ENCODE measurements at regions of chr16 and their contacts with region 1.

Region 1: DNA sequence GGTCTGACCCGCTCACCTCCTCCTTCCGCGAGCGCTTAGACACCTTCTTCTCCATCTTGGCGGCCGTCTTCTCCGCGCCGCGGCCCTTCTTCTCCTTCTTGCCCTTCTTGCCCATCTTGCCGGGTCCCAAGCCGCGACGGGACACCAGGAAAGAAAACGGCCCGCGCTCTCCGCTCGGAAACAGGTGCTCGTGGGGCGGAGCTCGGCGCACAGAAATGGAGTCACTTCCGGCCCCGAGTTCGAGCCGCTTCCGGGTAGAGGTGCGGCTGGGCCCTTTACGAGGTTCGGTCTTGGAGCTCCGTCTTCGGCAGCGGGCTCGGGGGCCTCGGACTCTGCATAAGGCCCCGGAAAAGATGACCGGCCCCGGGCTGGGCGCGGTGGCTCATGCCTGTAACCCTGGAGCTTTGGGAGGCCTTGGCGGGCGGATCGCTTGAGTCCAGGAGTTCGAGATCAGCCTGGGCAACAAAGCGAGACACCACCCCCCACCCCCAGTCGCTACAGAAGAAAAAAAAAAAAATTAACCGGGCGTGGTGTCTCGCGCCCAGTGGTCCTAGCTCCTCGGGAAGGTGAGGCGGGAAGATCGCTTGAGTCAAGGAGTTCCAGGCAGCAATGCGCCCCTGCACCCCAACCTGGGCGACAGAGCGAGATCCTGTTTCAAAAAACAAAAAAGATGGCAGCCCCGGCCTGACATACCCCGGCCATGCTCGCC is at the start of gene KLHDC4:
- DNase-seq: peak; percentile 75
- ATAC-seq: peak; percentile 74
- H3K4me3 ChIP-seq: peak within 1 kb of the TSS; percentile 99
- H3K27ac ChIP-seq: peak within 1 kb of the TSS; percentile 18; the same call in 1 of the 2 replicates
- H3K4me1 ChIP-seq: 0 out of 2 replicates have a peak, but pooled peaks cover 4% of the 10 kb centered on the region
- H3K27me3 ChIP-seq: no peaks in the 10 kb centered on the region
- CTCF ChIP-seq: no peak
- total RNA-seq, gene KLHDC4: 36.3 and 68.2 TPM in 2 replicates

Region 2: DNA sequence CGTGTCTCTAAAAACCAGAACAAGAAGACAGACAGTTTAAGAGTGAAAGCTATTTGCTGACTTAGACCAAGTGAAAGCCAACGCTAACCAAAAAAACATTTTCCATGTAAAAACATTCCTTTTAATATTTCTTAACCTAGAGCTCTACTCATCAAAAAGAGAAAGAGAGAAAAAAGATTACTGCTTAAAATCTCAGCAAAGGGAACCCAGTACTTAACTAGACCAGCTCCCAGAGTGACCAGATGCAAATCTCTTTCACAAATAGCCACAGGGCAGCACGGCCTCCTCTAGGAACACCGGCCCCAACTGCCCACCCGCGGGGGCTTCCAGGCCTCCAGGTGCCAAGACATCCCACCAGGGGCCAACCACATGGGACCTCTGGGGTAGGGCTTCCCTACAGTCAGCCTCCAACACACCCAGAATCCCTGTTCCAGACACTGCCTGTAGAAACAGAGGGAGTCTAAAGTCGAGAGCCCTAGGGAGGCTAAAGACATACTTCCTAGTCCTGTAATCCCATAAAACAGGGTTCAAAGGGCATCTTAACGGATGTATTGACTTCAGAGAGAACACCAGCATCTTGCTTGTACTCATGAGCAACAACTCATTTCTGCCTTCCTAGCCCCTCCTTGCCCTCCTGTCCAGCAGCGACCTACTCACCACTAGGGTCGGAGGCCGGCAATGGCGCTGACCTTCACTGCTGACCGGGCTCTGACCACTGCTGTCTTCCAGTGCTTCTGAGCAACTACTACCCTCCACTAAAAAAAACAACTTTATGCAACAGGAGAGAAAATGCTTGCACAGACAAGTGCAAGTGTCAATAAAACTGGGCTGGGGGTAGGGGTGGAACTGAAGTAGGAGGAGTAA is 294.4 kb before region 1 on chr16:
- CTCF ChIA-PET with region 1: no interaction called
- POLR2A ChIA-PET with region 1: no interaction called
- intact Hi-C with region 1: no loop called
- DNase-seq: no peak
- ATAC-seq: no peak
- H3K4me3 ChIP-seq: no peak overlapping the region
- H3K27ac ChIP-seq: no peak overlapping the region
- H3K4me1 ChIP-seq: peaks cover 3% of the 10 kb centered on the region; the same call in 1 of the 2 replicates
- H3K27me3 ChIP-seq: no peaks in the 10 kb centered on the region
- CTCF ChIP-seq: no peak

Region 3: GRCh38 chr16:87587636-87588035 is 178.3 kb before region 1 on chr16:
- CTCF ChIA-PET with region 1: interaction called, 5 read pairs
- POLR2A ChIA-PET with region 1: no interaction called
- intact Hi-C with region 1: loop called (anchors 1 kb)
- DNase-seq: no peak
- ATAC-seq: no peak
- H3K4me3 ChIP-seq: no peak overlapping the region
- H3K27ac ChIP-seq: no peak overlapping the region
- H3K4me1 ChIP-seq: peaks cover 14% of the 10 kb centered on the region
- H3K27me3 ChIP-seq: peaks cover 20% of the 10 kb centered on the region; the same call in 1 of the 2 replicates
- CTCF ChIP-seq: no peak

Region 4: DNA sequence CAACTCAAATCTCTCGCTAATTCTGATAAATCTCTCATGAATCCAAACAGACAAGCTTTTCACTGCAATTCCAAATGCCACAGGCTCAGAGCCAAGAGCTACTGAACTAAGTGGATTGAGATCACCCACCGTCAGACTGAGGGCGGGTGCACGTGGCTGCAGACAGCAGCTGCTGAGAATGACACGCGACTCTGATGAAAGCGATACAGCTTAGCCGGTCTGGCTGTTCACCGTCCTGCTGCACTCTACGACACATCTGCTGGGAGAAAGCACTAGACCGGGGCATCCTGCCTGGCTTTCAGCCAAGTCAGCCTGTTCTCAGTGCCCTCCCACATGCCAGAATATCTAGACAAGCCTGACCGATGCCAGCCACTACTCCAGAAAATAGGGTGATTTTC is 42.7 kb before region 1 on chr16:
- CTCF ChIA-PET with region 1: no interaction called
- POLR2A ChIA-PET with region 1: no interaction called
- intact Hi-C with region 1: no loop called
- DNase-seq: no peak
- ATAC-seq: no peak
- H3K4me3 ChIP-seq: no peak overlapping the region
- H3K27ac ChIP-seq: no peak overlapping the region
- H3K4me1 ChIP-seq: no peaks in the 10 kb centered on the region
- H3K27me3 ChIP-seq: no peaks in the 10 kb centered on the region
- CTCF ChIP-seq: no peak

Region 5: DNA sequence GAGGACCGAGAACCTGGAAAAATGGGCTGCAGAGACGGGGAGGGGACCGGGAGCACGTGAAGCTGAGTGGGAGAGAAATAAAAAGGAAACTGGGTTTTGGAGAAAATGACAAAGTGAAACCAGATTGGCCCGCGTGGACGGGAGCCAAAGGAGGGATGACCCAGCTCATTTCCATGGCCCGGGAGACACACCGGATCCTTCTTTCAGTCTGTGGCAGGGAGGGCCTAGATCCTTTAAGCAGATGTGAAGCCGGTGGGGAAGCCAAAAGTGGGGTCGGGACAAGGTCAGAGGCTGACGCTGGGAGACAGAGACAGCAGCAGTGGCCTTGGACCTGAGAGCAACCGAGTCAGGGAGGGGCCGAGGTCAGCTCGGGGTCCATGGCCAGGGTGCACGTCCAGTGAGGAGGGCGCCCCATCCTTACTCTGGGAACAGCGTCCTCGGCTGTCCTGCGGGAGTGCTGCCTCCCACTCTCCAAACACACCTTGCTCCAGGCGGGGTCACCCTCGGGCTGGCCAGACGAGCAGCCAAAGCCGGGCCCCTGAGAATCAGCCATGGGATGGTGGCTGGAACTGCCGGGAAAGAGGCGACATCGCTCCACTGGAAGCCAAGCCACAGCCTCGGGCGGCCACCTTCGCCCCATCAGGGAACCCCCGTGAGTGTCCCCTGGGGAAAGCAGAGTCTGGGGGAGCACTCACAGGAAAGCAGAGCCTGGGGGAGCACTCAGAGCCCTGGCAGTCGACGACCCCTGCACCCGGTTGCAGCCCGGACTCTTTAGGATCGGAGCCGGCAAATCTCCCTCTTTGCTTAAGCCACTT is 153.1 kb after region 1 on chr16:
- CTCF ChIA-PET with region 1: interaction called, 11 read pairs
- POLR2A ChIA-PET with region 1: no interaction called
- intact Hi-C with region 1: no loop called
- DNase-seq: no peak
- ATAC-seq: no peak
- H3K4me3 ChIP-seq: no peak overlapping the region
- H3K27ac ChIP-seq: no peak overlapping the region
- H3K4me1 ChIP-seq: no peaks in the 10 kb centered on the region
- H3K27me3 ChIP-seq: no peaks in the 10 kb centered on the region
- CTCF ChIP-seq: no peak

Region 6: DNA sequence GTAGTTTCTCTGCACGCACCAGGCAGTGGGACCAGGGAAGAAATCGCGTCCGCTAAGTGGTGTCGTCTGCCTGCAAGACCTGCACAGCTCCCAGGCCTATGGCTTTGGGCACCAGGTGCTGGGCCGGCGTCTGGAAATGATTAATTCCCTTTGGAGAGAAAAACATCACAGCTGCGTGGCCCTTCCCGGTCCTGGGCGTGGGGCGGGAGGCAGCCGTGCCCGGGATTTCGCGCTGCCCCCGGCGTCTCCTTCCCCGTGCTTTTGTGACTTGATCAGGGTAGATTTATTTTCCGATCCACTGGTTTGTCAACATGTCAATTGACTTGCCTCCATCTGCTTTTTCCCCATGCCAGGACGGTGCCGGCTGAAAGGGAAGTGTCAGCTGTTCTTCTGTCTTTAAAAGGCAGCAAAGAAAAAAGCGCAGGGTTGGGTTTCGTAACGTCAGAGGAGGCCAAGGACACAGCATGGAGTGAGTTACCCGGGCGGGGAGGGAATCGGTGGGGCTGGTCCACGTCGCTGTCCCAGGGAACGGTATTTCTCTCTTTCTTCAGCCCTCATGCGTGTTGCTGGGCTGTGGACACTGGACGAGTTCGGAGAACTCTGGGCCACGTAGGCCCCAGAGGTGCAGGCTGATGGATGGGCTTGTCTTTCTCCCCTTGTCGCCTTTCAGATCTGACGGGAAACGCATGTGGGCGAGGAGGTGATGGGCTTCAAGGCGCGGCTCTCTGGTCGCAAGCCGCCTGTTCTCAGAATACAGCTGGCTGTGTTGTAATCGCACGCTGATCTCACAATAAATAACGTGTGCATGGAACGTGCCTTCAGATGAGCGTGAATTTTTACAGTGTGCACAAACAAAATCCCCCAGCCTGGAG is 428.7 kb after region 1 on chr16:
- CTCF ChIA-PET with region 1: no interaction called
- POLR2A ChIA-PET with region 1: no interaction called
- intact Hi-C with region 1: no loop called
- DNase-seq: no peak
- ATAC-seq: peak; percentile 49
- H3K4me3 ChIP-seq: no peak overlapping the region
- H3K27ac ChIP-seq: no peak overlapping the region
- H3K4me1 ChIP-seq: no peaks in the 10 kb centered on the region
- H3K27me3 ChIP-seq: no peaks in the 10 kb centered on the region
- CTCF ChIP-seq: no peak

Measured in PC-3 (cell line).